HAP-1 (cell line): ENCODE measurements at regions of chr15 and their contacts with region 1.

Region 1: GRCh38 chr15:63291507-63291906 is 14.1 kb downstream of the APH1B start:
- DNase-seq: no peak
- H3K4me3 ChIP-seq: no peak overlapping the region
- H3K4me1 ChIP-seq: peaks cover 7% of the 10 kb centered on the region
- H3K27me3 ChIP-seq: no peaks in the 10 kb centered on the region

Region 2: GRCh38 chr15:63402498-63403253 is 111.2 kb after region 1 on chr15:
- in situ Hi-C with region 1: loop called (anchors 5 kb)
- DNase-seq: peak in 1 of 2 experiments; percentile 85
- H3K4me3 ChIP-seq: no peak overlapping the region
- H3K4me1 ChIP-seq: no peaks in the 10 kb centered on the region
- H3K27me3 ChIP-seq: peaks cover 47% of the 10 kb centered on the region